Mammary epithelial cell (primary cell): ENCODE measurements at regions of chr15 and their contacts with region 1.

Region 1: DNA sequence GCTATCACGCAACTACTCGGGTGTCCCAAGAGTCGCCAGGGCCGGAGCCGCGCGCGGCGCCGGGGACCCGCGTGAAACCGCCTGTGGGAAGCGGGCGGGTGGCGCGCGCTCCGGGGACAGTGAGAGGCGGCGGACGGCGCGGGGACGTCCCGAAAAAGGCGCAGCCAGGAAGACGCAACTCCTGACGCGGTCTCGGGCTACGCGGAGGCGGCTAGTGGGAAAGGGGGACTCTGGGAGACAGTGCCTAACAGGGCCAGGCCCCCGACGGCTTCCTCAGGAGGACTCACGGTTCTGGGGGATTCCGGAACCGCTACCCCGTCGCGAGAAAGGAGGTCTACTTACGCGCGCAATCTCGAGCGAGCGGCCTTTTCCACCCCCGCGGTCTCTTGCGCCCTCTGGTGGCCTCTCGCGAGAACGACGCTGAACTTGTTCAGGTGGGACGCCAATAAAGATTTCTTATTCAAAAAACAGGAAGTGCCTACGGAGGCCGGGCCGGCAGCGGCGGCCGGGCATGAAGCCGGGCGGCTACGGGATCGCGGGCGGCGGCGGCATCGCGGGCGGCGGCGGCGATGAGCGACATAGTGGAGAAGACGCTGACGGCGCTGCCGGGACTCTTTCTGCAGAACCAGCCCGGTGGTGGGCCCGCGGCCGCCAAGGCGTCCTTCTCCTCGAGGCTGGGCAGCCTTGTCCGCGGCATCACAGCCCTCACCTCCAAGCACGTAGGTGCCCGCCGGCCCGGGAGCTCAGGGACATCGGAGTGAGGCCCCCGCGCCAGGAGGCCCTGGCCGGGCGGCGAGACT is at the start of gene AP4E1:
- DNase-seq: peak; percentile 90
- H3K4me3 ChIP-seq: peak within 1 kb of the TSS; percentile 63 to 91 (median 81)
- H3K27ac ChIP-seq: peak within 1 kb of the TSS; percentile 87
- H3K4me1 ChIP-seq: peaks cover 24% of the 10 kb centered on the region
- H3K27me3 ChIP-seq: no peaks in the 10 kb centered on the region
- CTCF ChIP-seq: peak; percentile 84 to 95
- total RNA-seq, gene AP4E1: 21.3 to 21.4 TPM

Region 2: DNA sequence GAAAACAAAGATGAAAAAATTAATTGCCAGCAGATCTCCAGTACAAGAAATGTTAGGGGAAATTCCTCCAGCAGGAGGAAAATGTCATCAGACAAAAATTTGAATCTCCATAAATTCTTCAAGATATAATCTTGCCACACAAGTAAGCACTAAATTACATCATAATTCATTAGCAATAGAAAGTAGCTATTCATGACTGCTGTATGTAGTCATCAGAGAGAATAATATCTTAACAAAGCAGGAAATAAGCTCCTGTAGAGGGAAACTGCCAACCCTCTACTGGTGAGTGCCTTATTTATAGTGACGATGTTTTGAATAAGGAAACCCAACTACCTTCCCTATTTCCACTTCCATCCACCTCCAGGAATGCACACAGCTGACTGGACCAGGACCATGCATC is 742.2 kb before region 1 on chr15:
- CTCF ChIA-PET with region 1: no interaction called
- dilution Hi-C with region 1: no loop called
- in situ Hi-C with region 1: loop called in 1 of 2 experiments (anchors 25 kb)
- intact Hi-C with region 1: no loop called
- DNase-seq: peak; percentile 83
- H3K4me3 ChIP-seq: no peak overlapping the region
- H3K27ac ChIP-seq: peak overlapping the region; percentile 53
- H3K4me1 ChIP-seq: peaks cover 29% of the 10 kb centered on the region
- H3K27me3 ChIP-seq: no peaks in the 10 kb centered on the region
- CTCF ChIP-seq: peak in 1 of 2 donors; percentile 11

Region 3: GRCh38 chr15:50424066-50424890 is 484.1 kb before region 1 on chr15 and contains the start of gene USP8:
- CTCF ChIA-PET with region 1: no interaction called
- dilution Hi-C with region 1: no loop called
- in situ Hi-C with region 1: no loop called
- intact Hi-C with region 1: loop called (anchors 10 kb)
- DNase-seq: peak; percentile 96
- H3K4me3 ChIP-seq: peak within 1 kb of the TSS; percentile 93 to 99 (median 94)
- H3K27ac ChIP-seq: peak within 1 kb of the TSS; percentile 93
- H3K4me1 ChIP-seq: peaks cover 9% of the 10 kb centered on the region
- H3K27me3 ChIP-seq: no peaks in the 10 kb centered on the region
- CTCF ChIP-seq: no peak
- total RNA-seq, gene USP8: 47.7 to 61.6 TPM

Region 4: DNA sequence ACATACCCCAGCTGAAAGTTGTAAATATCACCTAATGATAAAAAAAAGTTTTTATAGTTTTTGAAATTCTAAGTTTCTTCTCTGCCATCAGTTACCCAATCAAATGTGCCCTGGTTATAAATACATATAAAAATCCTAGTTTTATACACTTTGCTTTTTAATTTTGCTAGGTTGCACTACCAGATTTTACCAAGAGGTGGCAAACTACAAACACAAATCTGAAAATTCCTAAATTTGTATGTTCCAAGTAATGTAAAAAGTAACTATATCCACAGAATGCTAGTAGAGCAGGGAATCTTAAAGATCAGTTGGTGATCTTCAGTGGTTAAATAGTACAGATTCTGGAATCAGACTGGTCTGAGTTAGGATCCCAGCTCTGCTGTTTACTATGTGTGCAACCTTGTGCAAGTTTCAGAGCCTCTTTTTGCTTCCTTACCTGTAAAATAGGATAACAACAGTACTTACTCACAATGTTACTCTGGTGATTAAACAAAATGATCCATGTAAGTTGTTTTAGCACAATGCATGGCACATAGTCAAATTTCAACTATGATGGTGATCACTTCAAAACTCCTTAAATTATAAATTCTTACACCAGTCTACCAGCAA is 232.8 kb before region 1 on chr15:
- CTCF ChIA-PET with region 1: no interaction called
- dilution Hi-C with region 1: no loop called
- in situ Hi-C with region 1: loop called (anchors 10 kb)
- intact Hi-C with region 1: loop called (anchors 1 kb)
- DNase-seq: peak; percentile 10
- H3K4me3 ChIP-seq: no peak overlapping the region
- H3K27ac ChIP-seq: no peak overlapping the region
- H3K4me1 ChIP-seq: peaks cover 9% of the 10 kb centered on the region
- H3K27me3 ChIP-seq: no peaks in the 10 kb centered on the region
- CTCF ChIP-seq: peak; percentile 59 to 75

Region 5: DNA sequence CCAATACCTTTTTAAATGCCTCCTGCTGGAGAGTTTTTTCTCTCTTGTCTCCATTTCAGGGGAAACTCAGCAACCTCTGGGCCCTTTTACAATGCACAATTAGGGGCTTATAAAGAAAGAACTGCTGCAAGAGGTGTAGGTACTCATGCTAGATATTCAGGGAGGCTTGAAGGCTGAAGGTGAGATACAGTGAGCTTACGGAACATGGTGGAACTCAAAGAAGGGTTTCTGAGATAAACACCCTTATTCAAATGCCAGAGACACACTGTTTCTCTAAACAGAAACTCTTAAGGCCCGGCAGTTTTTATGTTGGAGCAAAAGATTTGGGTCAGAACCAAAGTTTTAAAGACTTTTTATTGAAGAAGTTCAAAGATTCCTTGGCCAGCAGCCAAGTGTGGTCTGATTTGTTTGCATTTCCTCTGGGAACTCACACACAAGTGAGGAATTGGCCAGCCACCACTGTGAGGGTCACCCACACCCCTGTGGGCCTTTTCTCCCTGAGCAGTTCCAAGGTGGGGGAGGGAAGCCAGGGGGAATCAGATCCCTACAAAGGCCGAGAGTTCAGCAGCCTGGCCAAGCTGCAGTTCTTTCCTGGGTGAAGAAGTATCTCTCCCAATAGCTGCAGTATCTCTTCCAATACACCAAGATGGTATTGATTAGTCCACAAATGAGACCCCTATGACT is 138.5 kb after region 1 on chr15:
- CTCF ChIA-PET with region 1: no interaction called
- dilution Hi-C with region 1: no loop called
- in situ Hi-C with region 1: no loop called
- intact Hi-C with region 1: no loop called
- DNase-seq: no peak
- H3K4me3 ChIP-seq: no peak overlapping the region
- H3K27ac ChIP-seq: no peak overlapping the region
- H3K4me1 ChIP-seq: peaks cover 2% of the 10 kb centered on the region
- H3K27me3 ChIP-seq: no peaks in the 10 kb centered on the region
- CTCF ChIP-seq: no peak

Region 6: DNA sequence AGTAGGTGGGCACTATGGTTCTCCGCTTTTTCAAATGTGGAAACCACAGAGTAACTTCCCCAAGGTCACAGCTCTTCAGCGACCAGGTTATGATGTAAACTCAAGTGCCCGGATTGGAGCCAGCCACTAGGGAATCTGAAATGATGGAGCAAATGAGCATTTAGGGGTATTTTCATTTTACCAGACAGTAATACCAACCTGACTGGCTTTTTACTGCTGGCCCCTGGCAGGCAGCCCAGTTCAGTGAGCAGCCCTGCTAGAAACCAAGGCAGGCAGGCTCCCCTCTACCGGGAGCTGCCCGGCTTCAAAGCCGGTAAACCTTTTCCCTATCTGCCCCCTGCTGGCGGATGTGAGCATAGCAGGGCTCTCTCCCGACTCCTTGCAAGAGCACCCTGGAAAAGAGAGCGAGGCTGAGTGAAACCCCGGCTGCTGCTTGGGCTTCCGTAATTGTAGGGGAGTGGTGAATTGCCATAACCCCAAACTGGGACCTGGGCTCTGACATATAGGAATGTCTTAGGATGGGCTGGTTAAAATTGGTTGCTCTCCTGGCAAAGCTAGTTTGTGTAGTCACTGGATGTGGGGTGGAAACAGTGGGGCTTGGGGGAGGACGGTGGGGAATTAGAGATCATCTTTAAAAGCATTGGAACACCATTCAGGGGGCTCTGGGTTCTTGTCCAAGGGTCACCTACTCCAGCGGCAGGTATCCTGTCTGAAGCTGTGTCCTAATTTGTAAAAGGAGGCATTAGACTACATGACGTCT is 284.3 kb after region 1 on chr15:
- CTCF ChIA-PET with region 1: interaction called, 3 read pairs
- dilution Hi-C with region 1: no loop called
- in situ Hi-C with region 1: no loop called
- intact Hi-C with region 1: loop called (anchors 1 kb)
- DNase-seq: peak; percentile 83
- H3K4me3 ChIP-seq: no peak overlapping the region
- H3K27ac ChIP-seq: no peak overlapping the region
- H3K4me1 ChIP-seq: peaks cover 29% of the 10 kb centered on the region
- H3K27me3 ChIP-seq: no peaks in the 10 kb centered on the region
- CTCF ChIP-seq: peak; percentile 75 to 96